Transverse colon (tissue), 4 donors: ENCODE measurements at regions of chr15 and their contacts with region 1.

Region 1: DNA sequence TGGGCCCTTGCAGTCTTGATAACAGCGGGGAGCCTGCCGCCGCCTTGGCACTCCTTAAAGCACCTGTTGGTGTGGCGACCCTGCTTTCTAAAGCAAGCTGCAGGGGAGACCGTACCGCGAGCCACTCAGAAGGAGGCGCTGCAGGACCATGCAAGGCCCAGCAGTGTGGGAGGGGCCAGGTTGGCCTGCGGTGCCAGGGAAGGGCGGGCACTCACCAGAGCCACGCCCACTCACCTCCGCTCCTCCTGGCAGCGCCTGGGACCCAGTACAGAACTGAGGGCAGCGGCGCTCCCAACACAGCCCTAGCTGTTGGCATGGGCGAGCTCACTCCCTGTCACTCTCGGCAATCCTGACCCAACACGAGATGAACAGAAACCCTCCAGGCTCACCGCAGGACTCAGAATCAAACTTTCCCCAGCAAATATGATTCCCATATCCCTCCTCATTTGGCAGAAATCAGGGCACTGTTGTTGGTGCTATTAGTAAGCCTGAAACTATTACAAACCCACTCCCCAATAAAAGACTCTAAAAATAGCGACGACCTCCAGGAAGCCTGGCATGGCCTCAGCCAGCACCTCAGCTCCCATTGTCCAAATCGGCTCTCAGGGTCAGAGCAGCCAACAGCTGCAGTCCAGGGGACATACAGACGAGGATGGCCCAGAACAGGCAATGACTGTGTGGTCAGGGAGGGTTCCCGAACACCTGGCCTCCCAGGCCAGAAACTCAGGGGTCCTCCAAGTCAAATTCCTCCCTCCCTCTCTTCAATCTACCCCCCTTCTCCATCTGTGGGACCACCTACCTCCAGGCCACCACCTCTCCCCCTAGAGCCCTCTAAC is 77.2 kb downstream of the TBC1D2B start:
- DNase-seq: peak; percentile 94
- H3K4me3 ChIP-seq: no peak overlapping the region
- H3K27ac ChIP-seq: peak overlapping the region in 3 of 4 donors; percentile 5 to 21 (median 13)
- H3K4me1 ChIP-seq: peaks cover 7 to 21% (median 14%) of the 10 kb centered on the region in 4 donors
- H3K27me3 ChIP-seq: no peaks in the 10 kb centered on the region
- CTCF ChIP-seq: peak; percentile 69 to 94 (median 81)
- EP300 ChIP-seq: no peak
- POLR2A ChIP-seq: no peak

Region 2: DNA sequence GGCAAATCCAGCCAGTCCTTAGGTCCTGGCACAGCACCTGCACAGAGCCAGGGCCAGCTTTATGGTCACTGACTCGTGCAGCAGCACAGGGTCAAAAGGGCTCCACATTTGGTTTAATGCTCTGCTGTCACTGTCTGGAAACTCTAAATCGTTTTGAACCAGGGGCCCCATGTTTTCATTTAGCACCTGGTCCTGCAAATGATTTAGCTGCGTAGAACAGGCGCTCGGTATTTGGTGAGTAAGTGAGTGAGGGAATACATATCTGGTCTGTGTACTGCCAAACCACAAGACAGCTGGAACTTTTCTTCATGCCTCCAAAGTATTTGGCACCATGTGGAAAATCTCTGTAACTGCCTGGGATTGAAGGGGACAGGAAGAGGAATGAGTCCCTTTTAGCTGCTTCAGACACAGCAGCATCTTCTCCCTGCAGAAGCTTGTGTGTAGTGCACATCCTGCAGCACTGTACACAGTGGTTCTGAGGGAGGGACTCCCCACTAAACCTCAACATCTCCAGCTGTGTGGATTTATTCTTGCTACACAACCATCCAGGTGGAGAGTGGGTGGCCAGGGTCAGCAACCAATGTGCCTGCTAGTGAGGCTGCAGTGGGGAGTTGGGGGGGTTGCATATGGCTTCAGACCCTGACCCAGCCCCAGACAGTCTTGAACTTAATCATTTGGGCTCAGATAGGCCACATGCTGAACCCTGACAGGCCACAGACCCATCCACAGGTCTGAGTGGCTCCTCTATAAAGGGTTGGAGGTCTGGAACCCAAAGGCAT is 93.1 kb after region 1 on chr15:
- in situ Hi-C with region 1: loop called in 1 of 4 experiments (anchors 10 kb)
- intact Hi-C with region 1: no loop called
- DNase-seq: peak; percentile 7
- H3K4me3 ChIP-seq: no peak overlapping the region
- H3K27ac ChIP-seq: peak overlapping the region; percentile 28 to 73 (median 46)
- H3K4me1 ChIP-seq: peaks cover 0 to 31% (median 17%) of the 10 kb centered on the region in 4 donors
- H3K27me3 ChIP-seq: no peaks in the 10 kb centered on the region
- CTCF ChIP-seq: no peak
- EP300 ChIP-seq: no peak
- POLR2A ChIP-seq: no peak

Region 3: GRCh38 chr15:78195735-78196201 is 195.5 kb after region 1 on chr15:
- in situ Hi-C with region 1: no loop called
- intact Hi-C with region 1: no loop called
- DNase-seq: peak; percentile 59
- H3K4me3 ChIP-seq: no peak overlapping the region
- H3K27ac ChIP-seq: no peak overlapping the region
- H3K4me1 ChIP-seq: no peaks in the 10 kb centered on the region
- H3K27me3 ChIP-seq: no peaks in the 10 kb centered on the region
- CTCF ChIP-seq: peak; percentile 68 to 86 (median 72)
- EP300 ChIP-seq: no peak
- POLR2A ChIP-seq: no peak

Region 4: DNA sequence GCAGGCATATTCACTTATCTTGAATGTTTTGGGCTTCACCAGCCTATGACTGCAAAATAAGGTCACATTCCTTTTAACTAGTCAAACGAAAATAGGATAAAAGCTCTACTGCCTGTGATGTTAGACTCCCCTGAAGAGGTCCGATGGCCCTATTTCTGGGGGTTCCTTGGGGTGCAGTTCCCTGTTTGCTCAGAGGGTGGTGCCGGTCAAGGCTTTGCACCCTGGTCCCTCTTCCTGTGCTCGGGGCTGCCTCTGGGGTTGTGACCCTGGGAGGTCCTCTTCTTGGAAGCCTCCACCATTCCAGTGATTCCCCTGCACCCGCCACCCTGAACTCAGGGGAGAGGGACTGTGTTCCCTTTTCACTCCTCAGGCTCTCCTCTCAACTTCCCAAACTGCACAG is 1195.5 kb after region 1 on chr15:
- in situ Hi-C with region 1: no loop called
- intact Hi-C with region 1: no loop called
- DNase-seq: no peak
- H3K4me3 ChIP-seq: no peak overlapping the region
- H3K27ac ChIP-seq: no peak overlapping the region
- H3K4me1 ChIP-seq: no peaks in the 10 kb centered on the region
- H3K27me3 ChIP-seq: peaks cover 8% of the 10 kb centered on the region
- CTCF ChIP-seq: no peak
- EP300 ChIP-seq: no peak
- POLR2A ChIP-seq: no peak